SK-MEL-5 (cell line): ENCODE measurements at regions of chr15 and their contacts with region 1.

Region 1: GRCh38 chr15:74322181-74323076 is 45.0 kb downstream of the CYP11A1 start:
- DNase-seq: peak; percentile 72

Region 2: DNA sequence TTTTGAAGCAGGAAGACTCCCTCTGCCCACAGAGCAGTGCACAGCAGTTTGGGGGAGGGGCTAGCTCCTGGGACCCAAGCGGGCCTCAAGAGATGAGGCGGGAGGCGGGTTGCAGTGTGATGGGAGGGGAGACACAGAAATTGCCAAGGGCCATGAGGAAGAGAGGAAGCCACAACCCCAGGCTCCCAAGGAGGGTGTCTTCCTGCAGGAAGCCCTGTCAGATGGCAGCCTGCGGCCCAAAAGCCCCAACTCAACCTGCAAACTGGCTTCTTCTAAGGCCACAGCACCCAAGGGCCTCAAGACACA is 199.3 kb before region 1 on chr15:
- in situ Hi-C with region 1: loop called (anchors 25 kb)
- DNase-seq: no peak